Activated CD8-positive, alpha-beta memory T cell treated with anti-CD3 and anti-CD28 coated beads, Interleukin-2, amount 10 ng/mL, durations not matched to agents 7 days and 5 days (primary cell): ENCODE measurements at regions of chr12 and their contacts with region 1.

Region 1: DNA sequence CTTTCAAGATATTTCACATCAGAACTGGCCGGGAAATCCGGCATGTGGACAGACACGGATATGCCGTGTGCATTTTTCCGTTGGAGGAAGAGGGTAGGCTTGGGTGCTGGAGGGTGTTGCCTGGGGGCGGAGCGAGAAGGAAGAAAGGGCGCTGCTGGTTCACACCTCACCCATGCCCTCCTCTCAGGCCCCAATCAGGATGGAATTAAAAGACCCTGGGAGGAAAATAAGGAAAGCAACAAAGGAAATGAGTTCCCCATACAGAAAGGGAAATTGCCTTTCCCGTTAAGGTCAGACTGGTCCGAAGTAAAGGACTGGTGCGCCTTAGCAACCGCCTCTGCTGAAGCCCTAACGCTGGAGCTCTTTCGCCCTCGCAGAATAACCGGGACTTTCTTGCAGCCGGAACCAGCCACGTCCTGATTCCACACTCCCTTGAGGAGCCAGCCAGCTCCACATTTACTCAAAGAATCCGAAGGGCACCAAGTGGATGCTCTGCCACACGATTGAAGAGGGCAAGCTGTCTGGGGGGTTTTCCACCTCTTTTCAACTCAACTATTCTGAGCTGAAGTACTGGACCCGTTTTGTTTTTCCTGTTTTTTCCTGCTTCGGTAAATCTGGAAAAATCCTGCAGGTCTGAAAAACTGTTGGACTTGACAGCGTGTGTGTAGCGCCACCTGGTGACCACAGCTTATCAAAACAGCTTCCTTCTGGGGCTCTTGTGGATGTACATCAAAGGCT is 37.7 kb upstream of the BCL2L14 start:
- DNase-seq: peak; percentile 78
- ATAC-seq: peak; percentile 87
- H3K4me3 Mint-ChIP-seq: peak overlapping the region; percentile 59
- H3K27ac Mint-ChIP-seq: peak overlapping the region; percentile 50
- H3K4me1 Mint-ChIP-seq: peaks cover 21% of the 10 kb centered on the region
- H3K27me3 Mint-ChIP-seq: no peaks in the 10 kb centered on the region

Region 2: GRCh38 chr12:11545484-11546330 is 487.3 kb before region 1 on chr12:
- CTCF ChIA-PET with region 1: interaction called, 11 read pairs
- DNase-seq: peak; percentile 75
- ATAC-seq: peak; percentile 79
- H3K4me3 Mint-ChIP-seq: peak overlapping the region; percentile 59
- H3K27ac Mint-ChIP-seq: peak overlapping the region; percentile 95
- H3K4me1 Mint-ChIP-seq: peaks cover 26% of the 10 kb centered on the region
- H3K27me3 Mint-ChIP-seq: no peaks in the 10 kb centered on the region

Region 3: DNA sequence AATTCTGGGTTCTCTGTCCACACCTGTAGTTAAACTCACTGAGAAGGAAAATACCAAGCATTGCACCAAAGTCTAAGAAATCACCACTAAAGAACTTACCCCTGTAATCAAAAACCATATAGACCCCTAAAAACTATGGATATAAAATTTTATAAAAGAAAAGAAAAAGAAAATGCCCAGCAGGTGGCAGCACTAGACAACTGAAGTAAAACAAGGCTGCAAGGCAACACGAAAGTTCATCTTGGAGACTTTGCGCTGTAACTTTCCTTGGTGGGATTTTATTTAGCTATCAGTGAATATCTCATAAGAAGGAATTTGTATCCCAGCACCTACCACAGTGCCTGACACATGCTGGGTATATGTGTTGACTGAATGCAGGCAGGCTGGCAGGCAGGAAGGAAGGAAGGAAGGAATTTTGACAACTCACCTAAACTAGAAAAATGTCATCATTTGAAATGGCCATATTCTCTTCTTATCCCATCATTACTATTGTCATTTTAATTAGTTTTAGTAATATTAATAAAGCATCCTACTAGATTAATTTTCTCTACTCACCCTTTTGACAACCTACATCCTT is 451.8 kb before region 1 on chr12:
- CTCF ChIA-PET with region 1: interaction called, 159 read pairs
- DNase-seq: peak; percentile 70
- ATAC-seq: no peak
- H3K4me3 Mint-ChIP-seq: no peak overlapping the region
- H3K27ac Mint-ChIP-seq: no peak overlapping the region
- H3K4me1 Mint-ChIP-seq: peaks cover 9% of the 10 kb centered on the region
- H3K27me3 Mint-ChIP-seq: peaks cover 28% of the 10 kb centered on the region

Region 4: GRCh38 chr12:11798856-11799501 is 234.0 kb before region 1 on chr12:
- CTCF ChIA-PET with region 1: interaction called, 10 read pairs
- DNase-seq: no peak
- ATAC-seq: no peak
- H3K4me3 Mint-ChIP-seq: no peak overlapping the region
- H3K27ac Mint-ChIP-seq: peak overlapping the region; percentile 33
- H3K4me1 Mint-ChIP-seq: peaks cover 20% of the 10 kb centered on the region
- H3K27me3 Mint-ChIP-seq: no peaks in the 10 kb centered on the region

Region 5: GRCh38 chr12:11981121-11981733 is 51.8 kb before region 1 on chr12:
- CTCF ChIA-PET with region 1: interaction called, 15 read pairs
- DNase-seq: peak; percentile 81
- ATAC-seq: peak; percentile 91
- H3K4me3 Mint-ChIP-seq: peak overlapping the region; percentile 28
- H3K27ac Mint-ChIP-seq: peak overlapping the region; percentile 96
- H3K4me1 Mint-ChIP-seq: peaks cover 46% of the 10 kb centered on the region
- H3K27me3 Mint-ChIP-seq: no peaks in the 10 kb centered on the region

Region 6: DNA sequence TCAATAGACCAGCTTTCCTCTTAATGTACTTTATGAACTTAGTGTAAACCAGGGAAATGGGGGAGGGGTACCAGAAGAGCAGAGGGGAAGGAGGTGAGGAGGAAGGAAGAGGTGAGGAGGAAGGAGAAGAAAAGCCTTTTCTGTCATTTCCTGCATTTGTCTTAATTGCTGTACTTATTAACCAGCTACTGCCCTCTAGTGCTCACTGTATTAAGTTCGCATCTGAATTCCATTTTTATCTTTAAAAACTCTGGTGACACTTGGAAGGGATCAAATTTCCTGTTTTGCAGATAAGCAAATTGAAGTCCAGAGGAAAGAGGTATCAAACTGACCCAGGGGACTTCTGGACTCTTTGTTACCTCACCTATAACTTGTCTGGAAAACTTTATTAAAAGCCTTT is 294.8 kb after region 1 on chr12:
- CTCF ChIA-PET with region 1: interaction called, 40 read pairs
- DNase-seq: no peak
- ATAC-seq: peak; percentile 58
- H3K4me3 Mint-ChIP-seq: no peak overlapping the region
- H3K27ac Mint-ChIP-seq: no peak overlapping the region
- H3K4me1 Mint-ChIP-seq: peaks cover 4% of the 10 kb centered on the region
- H3K27me3 Mint-ChIP-seq: peaks cover 23% of the 10 kb centered on the region

Region 7: GRCh38 chr12:12533238-12533829 is 500.3 kb after region 1 on chr12:
- CTCF ChIA-PET with region 1: no interaction called
- DNase-seq: no peak
- ATAC-seq: no peak
- H3K4me3 Mint-ChIP-seq: no peak overlapping the region
- H3K27ac Mint-ChIP-seq: no peak overlapping the region
- H3K4me1 Mint-ChIP-seq: peaks cover 14% of the 10 kb centered on the region
- H3K27me3 Mint-ChIP-seq: no peaks in the 10 kb centered on the region